AG04450 (cell line): ENCODE measurements at regions of chr6 and their contacts with region 1.

Region 1: GRCh38 chr6:21593412-21593926 is at the start of gene SOX4:
- DNase-seq: peak; percentile 98
- H3K4me3 ChIP-seq: peak within 1 kb of the TSS; percentile 95
- H3K27ac ChIP-seq: peak within 1 kb of the TSS; percentile 85
- H3K27me3 ChIP-seq: no peaks in the 10 kb centered on the region
- CTCF ChIP-seq: no peak
- polyA plus RNA-seq, gene SOX4: 29.1 and 33.5 TPM in 2 replicates

Region 2: GRCh38 chr6:20564269-20564668 is 1029.2 kb before region 1 on chr6:
- CTCF ChIA-PET with region 1: interaction called, 133 read pairs
- POLR2A ChIA-PET with region 1: interaction called, 11 read pairs
- DNase-seq: no peak
- H3K4me3 ChIP-seq: no peak overlapping the region
- H3K27ac ChIP-seq: no peak overlapping the region
- H3K27me3 ChIP-seq: no peaks in the 10 kb centered on the region
- CTCF ChIP-seq: peak; percentile 53

Region 3: DNA sequence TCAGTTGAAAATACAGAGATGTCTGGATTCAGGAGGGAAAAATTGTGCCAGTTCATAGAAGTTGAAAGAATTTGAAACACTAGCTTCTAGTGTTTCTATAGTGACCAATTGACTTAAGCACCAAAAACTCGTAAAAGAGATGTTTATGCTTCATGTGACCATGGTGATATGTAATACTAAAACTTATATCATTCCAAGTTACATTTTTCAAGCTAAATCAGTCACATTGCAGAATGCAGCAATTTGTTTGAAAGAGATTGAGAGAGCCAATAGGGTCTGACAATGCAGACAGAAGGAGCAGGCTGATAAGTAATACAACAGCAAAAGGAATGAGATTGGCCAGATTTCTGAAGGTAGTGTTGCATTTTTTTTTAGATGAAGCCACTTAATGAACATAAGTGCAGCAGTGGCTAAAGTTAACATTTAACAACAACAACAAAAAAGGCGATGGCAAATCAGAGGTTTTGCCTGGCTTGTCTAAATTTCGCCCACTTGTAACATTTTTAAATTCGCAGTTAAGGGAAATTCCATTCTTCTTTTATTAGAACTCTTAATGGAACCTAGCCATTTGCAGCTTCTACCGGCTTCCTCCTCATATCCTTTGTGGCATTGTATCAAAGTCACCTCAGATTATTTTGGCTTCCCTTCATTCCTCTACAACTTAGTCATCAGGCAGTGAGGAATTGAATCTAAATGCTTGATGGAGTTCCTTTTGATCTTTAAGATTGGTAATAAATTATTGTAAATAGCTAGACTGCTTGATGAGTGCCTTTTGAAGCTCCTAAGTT is 483.9 kb before region 1 on chr6:
- CTCF ChIA-PET with region 1: interaction called, 10 read pairs
- POLR2A ChIA-PET with region 1: no interaction called
- DNase-seq: no peak
- H3K4me3 ChIP-seq: no peak overlapping the region
- H3K27ac ChIP-seq: no peak overlapping the region
- H3K27me3 ChIP-seq: no peaks in the 10 kb centered on the region
- CTCF ChIP-seq: no peak

Region 4: GRCh38 chr6:21742238-21742660 is 148.8 kb after region 1 on chr6:
- CTCF ChIA-PET with region 1: interaction called, 3 read pairs
- POLR2A ChIA-PET with region 1: interaction called, 14 read pairs
- DNase-seq: peak; percentile 91
- H3K4me3 ChIP-seq: no peak overlapping the region
- H3K27ac ChIP-seq: no peak overlapping the region
- H3K27me3 ChIP-seq: no peaks in the 10 kb centered on the region
- CTCF ChIP-seq: no peak

Region 5: GRCh38 chr6:21769405-21769861 is 176.0 kb after region 1 on chr6:
- CTCF ChIA-PET with region 1: interaction called, 4 read pairs
- POLR2A ChIA-PET with region 1: interaction called, 17 read pairs
- DNase-seq: peak; percentile 95
- H3K4me3 ChIP-seq: no peak overlapping the region
- H3K27ac ChIP-seq: peak overlapping the region; percentile 48
- H3K27me3 ChIP-seq: no peaks in the 10 kb centered on the region
- CTCF ChIP-seq: no peak

Region 6: DNA sequence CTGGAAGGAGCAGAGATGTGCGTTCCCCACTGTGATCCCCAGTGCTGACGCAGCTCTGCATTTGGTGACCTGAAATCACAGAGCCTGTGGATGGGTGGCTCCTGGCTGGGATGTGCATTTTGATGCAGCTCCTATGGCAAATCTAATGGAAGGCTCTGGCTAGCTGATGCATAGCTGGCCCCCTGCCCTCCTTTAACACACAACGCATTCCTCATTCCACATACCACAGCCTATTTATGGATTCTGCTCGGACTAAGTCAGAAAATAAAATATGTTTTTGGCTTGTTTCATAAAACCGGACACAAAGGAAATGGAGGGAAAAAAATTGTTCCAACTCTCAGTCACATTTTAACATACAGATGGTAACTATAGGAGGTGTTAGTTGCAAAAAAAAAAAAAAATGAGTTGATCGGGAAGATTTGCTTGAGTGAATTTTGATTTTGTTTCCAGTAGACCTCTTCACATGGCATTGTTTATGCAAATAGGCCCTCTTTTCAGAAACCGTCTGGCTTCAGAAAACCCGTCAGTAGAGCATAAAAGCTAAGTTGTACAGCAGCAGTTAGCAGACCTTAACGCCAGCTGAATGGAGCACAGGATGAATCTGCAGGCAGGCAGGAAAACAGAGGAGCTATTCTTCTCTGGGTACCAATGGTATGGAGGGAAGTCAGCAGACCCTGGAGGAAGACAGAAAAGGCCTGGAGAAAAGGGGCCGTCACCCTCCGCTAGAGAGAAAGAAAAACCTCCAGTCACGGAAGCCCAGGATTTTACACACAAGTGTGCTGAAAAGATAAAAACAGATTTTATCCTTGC is 1191.3 kb after region 1 on chr6:
- CTCF ChIA-PET with region 1: interaction called, 3 read pairs
- POLR2A ChIA-PET with region 1: interaction called, 11 read pairs
- DNase-seq: peak; percentile 29
- H3K4me3 ChIP-seq: peak overlapping the region; percentile 21; the same call in 1 of the 2 replicates
- H3K27ac ChIP-seq: peak overlapping the region; percentile 71
- H3K27me3 ChIP-seq: no peaks in the 10 kb centered on the region
- CTCF ChIP-seq: no peak